ENCODE measurements at regions of chr9 and their contacts with region 1.

Region 1: DNA sequence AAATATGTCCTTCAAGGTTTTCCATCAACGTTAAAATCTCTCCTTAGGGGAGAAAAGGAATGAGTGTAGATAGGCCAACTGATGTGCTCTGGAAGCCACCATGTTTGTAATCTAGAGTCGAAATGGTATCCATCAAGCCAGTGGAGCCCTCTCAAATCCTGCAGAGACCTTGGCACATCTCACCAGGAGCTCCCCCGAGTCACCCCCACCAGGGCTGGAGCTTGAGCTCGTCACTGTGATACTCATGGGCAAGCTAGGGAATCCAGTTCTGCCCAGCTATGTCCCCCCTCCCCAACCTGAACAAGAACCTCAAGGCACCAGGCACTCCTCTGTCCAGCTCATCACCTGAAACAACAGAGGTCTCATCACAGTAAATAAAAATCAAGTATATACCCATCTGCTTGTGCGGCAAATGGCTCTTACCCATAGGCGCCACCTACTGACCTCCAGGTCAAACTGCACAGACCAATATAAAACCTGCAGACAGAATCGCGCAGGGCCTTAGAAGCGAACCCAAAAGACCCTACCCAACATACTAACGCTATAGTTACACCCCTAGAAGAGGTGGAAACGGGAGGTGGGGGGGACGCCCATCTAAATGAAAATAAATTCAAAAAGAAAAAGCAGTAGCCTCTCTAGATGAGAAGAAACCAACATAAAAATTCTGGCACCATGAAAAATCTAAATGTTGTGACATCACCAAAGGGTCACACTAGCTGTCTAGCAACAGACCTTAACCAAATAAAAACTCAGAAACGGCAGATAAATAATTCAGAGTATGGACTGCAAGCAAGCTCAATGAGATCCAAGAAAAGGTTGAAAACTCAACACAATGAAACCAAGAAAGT is 75.0 kb downstream of the TTC39B start:
- DNase-seq: no peak
- ATAC-seq: no peak
- H3K4me3 Mint-ChIP-seq: no peak overlapping the region
- H3K27ac Mint-ChIP-seq: no peak overlapping the region
- H3K4me1 Mint-ChIP-seq: peaks cover 13% of the 10 kb centered on the region
- H3K27me3 Mint-ChIP-seq: no peaks in the 10 kb centered on the region

Region 2: DNA sequence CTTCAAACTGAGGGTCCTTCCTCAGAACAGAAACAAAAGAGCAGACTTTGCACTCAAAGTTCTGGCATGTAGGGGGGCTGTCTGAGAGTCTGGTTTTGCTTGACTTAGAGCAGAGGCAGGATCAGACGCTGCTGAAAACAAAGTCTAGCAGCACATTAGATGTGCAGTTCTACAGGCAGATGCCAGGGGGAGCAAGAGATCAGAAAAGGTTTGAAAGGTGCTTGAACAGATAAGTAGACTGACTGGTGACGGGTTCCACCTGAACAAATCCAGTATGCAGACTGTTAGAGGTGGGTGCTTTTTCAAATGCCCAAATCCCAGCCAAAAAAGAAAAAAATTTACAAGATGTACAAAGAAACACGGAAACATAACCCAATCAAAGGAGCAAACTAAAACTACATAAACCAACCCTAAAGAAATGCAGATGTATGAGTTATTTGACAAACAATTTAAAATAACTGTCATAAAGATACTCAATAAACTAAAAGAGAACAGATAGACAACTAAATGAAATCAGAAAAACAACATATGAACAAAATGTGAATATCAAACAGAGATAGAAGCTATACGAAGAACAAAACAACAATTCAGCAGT is 127.1 kb before region 1 on chr9:
- CTCF ChIA-PET with region 1: no interaction called
- POLR2A ChIA-PET with region 1: no interaction called
- DNase-seq: peak; percentile 57
- ATAC-seq: peak; percentile 67
- H3K4me3 Mint-ChIP-seq: no peak overlapping the region
- H3K27ac Mint-ChIP-seq: no peak overlapping the region
- H3K4me1 Mint-ChIP-seq: no peaks in the 10 kb centered on the region
- H3K27me3 Mint-ChIP-seq: no peaks in the 10 kb centered on the region

Region 3: DNA sequence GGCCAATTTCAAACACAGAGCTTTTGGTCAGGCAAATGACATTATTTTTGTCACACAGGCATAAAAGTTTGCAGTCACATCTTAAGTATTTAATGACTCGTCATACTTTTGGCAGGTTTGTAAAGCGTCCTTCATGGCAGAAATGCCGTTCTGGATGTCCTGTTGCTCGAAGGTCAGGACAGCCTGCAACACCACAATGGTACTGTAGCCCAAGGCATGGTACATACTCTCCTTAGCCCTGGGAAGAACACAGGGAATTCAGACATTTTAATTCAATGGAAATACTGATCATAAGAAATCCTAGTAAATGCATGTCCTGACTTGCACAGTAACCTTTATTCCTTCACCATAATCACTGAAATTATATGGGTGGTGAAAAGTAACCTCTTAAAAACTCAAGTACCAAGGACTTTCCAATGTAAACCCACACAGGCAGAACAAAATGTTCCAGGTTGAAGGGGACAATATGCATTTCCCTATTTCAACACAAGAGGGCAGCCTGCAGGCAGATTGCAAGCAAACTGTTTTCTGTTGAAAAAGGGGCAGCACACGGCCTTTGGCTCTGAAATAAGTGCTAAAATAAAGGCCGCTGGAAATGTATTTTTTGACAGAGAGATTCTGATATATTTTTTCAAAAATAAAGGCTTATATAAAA is 20.7 kb before region 1 on chr9:
- CTCF ChIA-PET with region 1: interaction called, 12 read pairs
- POLR2A ChIA-PET with region 1: no interaction called
- DNase-seq: peak; percentile 76
- ATAC-seq: peak; percentile 44
- H3K4me3 Mint-ChIP-seq: no peak overlapping the region
- H3K27ac Mint-ChIP-seq: no peak overlapping the region
- H3K4me1 Mint-ChIP-seq: no peaks in the 10 kb centered on the region
- H3K27me3 Mint-ChIP-seq: no peaks in the 10 kb centered on the region

Region 4: DNA sequence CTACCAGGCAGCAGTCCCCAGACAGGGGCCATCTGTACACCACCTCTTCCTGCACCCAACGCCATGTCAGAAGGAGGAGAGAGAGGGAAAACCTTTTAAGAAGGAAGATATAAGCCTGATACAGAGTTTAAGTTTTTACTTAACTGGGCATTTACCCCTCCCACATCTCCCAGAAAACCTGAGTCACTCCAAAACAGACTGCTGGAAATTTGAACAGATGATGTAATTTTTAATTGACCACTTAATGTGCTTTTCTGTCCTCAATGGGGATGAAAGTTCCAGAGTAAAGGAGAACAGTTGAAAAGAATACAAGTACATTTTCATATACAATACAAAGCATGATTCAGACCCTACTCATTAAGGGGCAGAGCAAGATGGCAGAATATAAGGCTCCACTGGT is 11.1 kb after region 1 on chr9:
- CTCF ChIA-PET with region 1: no interaction called
- POLR2A ChIA-PET with region 1: no interaction called
- DNase-seq: no peak
- ATAC-seq: no peak
- H3K4me3 Mint-ChIP-seq: no peak overlapping the region
- H3K27ac Mint-ChIP-seq: no peak overlapping the region
- H3K4me1 Mint-ChIP-seq: peaks cover 21% of the 10 kb centered on the region
- H3K27me3 Mint-ChIP-seq: no peaks in the 10 kb centered on the region

Measured in activated CD8-positive, alpha-beta T cell treated with anti-CD3 and anti-CD28 coated beads, Interleukin-2, amount 10 ng/mL, durations not matched to agents 7 days and 5 days (primary cell).